CD14-positive monocyte (primary cell): ENCODE measurements at regions of chr6 and their contacts with region 1.

Region 1: GRCh38 chr6:155418017-155418761 is 37.5 kb downstream of the NOX3 start:
- DNase-seq: peak; percentile 72 to 86 (median 75)
- H3K4me3 ChIP-seq: peak overlapping the region; percentile 18 to 50 (median 42)
- H3K4me3 Mint-ChIP-seq: peak overlapping the region; percentile 71 to 74
- H3K27ac ChIP-seq: peak overlapping the region; percentile 70 to 85
- H3K27ac Mint-ChIP-seq: peak overlapping the region; percentile 90 to 99 (median 98)
- H3K4me1 ChIP-seq: peaks cover 20 to 22% of the 10 kb centered on the region in 2 donors
- H3K4me1 Mint-ChIP-seq: peaks cover 24% of the 10 kb centered on the region
- H3K27me3 ChIP-seq: no peaks in the 10 kb centered on the region
- H3K27me3 Mint-ChIP-seq: no peaks in the 10 kb centered on the region
- CTCF ChIP-seq: no peak

Region 2: DNA sequence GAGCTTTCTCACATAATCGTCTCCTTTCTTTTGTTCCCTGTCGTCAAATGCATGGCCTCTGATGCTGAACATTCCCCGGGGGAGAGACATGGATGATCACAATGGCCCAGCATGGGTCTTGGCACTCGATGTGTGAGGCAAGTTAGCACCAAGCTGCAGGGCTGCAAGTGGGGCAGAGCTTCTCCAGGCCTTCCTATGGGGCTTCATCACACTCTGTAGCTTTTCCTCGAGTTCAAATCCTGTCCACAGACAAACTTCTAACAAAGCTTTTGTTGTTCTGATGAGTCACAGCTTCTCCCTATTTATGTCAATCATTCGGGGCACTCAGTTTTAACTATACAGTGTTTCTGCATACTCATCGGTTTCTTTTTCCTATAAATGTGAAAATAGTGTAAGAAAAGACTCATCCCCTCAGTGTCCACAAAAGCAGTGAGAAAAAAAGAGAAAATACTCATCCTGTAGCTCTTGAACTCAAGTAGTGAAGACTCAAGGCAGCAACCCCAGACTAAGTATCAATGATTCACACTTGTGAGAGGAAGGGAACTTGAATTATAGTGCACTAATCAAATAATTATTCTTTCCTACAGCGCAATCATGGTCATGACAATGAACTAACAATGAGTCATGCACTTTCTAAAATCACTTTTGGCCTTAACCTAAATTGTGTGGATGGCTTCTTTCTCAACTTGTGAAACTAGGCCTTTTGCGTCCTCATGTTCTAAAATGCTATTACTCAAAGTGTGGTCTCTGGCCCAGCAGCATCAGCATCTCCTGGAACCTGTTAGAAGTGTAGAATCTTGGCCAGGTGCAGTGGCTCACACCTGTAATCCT is 105.8 kb after region 1 on chr6:
- intact Hi-C with region 1: loop called in 1 of 2 experiments (anchors 5 kb)
- DNase-seq: peak in 2 of 3 donors; percentile 1 to 16
- H3K4me3 ChIP-seq: no peak overlapping the region
- H3K4me3 Mint-ChIP-seq: no peak overlapping the region
- H3K27ac ChIP-seq: no peak overlapping the region
- H3K27ac Mint-ChIP-seq: peak overlapping the region in 3 of 7 donors; percentile 24 to 84 (median 65)
- H3K4me1 ChIP-seq: peaks cover 2 to 7% of the 10 kb centered on the region in 2 donors
- H3K4me1 Mint-ChIP-seq: peaks cover 10% of the 10 kb centered on the region
- H3K27me3 ChIP-seq: no peaks in the 10 kb centered on the region
- H3K27me3 Mint-ChIP-seq: peaks cover 0 to 2% (median 2%) of the 10 kb centered on the region in 3 donors
- CTCF ChIP-seq: no peak